ENCODE measurements at regions of chr2 and their contacts with region 1.

Region 1: DNA sequence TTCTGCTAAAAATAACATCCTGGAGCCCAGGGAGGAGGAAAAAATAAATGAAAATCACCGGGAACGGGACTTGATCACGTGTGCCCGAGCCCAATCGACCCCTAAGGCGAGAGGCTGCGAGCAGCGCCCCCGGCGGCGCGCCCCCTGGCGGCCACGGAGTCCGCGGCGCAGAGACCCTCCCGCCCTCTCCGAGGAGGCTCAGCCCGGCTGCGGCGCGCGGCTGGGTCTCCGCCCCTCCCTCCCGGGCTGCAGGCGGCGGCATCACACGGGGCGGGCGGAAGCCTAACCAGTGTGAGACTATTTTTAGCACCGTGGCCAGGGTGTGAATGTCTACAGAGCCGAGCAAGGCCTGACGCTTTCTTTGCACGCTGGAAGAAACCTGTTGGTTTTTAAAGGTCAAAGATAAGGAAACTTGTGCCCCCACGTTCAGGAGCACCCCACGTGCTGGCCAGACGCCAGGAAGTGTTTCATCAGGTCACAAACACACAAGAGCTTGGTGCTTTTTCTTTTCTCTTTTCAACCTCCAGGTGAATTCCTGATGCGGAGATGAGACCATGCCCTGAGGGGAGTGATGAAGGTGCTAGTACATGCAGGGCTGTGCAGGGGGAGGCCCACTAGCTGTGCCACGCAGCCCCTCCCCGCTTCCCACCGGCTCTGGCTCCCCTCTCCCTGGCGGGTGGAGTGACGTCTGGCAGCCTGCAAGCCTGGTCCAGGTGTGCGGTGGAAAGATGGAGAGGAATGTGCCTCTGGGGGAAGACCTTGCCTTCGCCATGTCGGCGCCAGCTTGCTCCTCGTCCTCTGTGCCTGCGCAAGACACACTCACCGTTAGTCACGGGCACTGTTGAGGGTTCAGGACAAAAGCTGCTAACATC is 35.3 kb upstream of the DNMT3A start:
- DNase-seq: peak; percentile 90 to 94
- H3K4me3 ChIP-seq: peak overlapping the region; percentile 16
- H3K4me3 Mint-ChIP-seq: peak overlapping the region; percentile 68
- H3K27ac Mint-ChIP-seq: peak overlapping the region; percentile 66
- H3K4me1 ChIP-seq: peaks cover 19% of the 10 kb centered on the region
- H3K4me1 Mint-ChIP-seq: peaks cover 23% of the 10 kb centered on the region
- H3K27me3 ChIP-seq: no peaks in the 10 kb centered on the region
- H3K27me3 Mint-ChIP-seq: no peaks in the 10 kb centered on the region
- CTCF ChIP-seq: peak; percentile 78 to 98

Region 2: DNA sequence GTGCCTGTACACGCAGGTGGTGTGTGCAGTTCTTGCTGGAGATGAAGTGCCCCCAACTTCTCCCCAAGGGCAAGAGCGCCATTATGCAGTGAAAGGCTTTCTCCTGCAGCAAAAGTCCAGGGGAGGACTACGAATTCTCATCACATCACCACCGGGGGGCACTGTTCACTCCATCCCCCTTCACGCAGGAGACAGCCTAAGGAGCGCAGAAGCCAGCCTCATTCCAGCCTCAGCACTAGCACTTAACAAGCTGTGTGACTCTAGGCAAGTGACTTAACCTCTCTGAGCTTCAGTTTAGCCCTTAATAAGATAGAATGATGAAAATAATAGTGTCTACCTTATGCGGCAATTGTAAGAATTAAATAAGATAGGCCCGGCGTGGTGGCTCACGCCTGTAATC is 67.6 kb before region 1 on chr2:
- CTCF ChIA-PET with region 1: interaction called, 5 read pairs
- POLR2A ChIA-PET with region 1: no interaction called
- intact Hi-C with region 1: loop called (anchors 2 kb)
- DNase-seq: peak; percentile 58 to 68
- H3K4me3 ChIP-seq: no peak overlapping the region
- H3K4me3 Mint-ChIP-seq: no peak overlapping the region
- H3K27ac Mint-ChIP-seq: no peak overlapping the region
- H3K4me1 ChIP-seq: 0 out of 2 replicates have a peak, but pooled peaks cover 3% of the 10 kb centered on the region
- H3K4me1 Mint-ChIP-seq: peaks cover 5% of the 10 kb centered on the region
- H3K27me3 ChIP-seq: no peaks in the 10 kb centered on the region
- H3K27me3 Mint-ChIP-seq: no peaks in the 10 kb centered on the region
- CTCF ChIP-seq: peak; percentile 49 to 53

Region 3: DNA sequence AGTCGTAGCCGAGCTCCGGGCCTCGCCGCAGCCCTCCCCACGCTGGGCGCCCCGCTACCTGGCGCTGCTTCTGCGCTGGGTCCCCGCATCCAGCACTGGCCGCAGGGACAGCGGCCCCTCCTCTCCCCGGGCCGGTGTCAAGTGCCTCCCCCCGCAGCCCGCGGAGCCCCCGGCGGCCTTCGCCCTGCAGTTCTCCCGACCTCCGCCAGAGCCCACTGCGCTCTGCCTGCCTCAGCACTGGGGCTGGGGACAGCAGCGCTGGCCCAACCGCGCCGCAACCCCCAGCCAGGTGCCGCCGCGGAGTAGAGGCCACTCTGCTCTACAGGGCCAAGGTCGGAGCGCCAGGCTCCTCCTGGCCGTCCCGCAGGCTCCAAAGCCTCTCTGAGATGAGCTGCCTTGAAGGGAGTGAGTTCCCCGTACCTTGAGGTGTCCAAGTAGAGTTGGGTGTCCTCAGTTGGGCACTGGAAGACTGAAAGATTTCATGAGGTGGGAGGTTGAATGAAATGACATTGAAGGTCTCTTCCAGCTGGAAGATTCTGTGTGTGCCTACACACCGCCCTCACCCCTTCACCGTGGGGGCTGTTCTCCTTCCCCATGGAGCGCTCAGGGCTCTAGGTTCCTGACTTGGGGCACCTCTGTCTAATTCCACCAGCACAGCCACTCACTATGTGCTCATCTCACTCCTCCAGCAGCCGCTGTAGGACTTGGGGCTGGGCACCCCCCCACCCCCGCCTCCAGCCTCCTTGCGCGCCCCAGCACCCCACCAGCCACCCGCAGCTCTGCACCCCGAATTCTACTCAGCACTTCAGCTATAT is 34.4 kb before region 1 on chr2:
- CTCF ChIA-PET with region 1: no interaction called
- POLR2A ChIA-PET with region 1: no interaction called
- intact Hi-C with region 1: loop called (anchors 1 kb)
- DNase-seq: peak; percentile 89 to 95
- H3K4me3 ChIP-seq: peak overlapping the region; percentile 37
- H3K4me3 Mint-ChIP-seq: peak overlapping the region; percentile 85
- H3K27ac Mint-ChIP-seq: peak overlapping the region; percentile 45
- H3K4me1 ChIP-seq: 0 out of 2 replicates have a peak, but pooled peaks cover 6% of the 10 kb centered on the region
- H3K4me1 Mint-ChIP-seq: peaks cover 5% of the 10 kb centered on the region
- H3K27me3 ChIP-seq: no peaks in the 10 kb centered on the region
- H3K27me3 Mint-ChIP-seq: no peaks in the 10 kb centered on the region
- CTCF ChIP-seq: peak; percentile 91 to 98

Region 4: DNA sequence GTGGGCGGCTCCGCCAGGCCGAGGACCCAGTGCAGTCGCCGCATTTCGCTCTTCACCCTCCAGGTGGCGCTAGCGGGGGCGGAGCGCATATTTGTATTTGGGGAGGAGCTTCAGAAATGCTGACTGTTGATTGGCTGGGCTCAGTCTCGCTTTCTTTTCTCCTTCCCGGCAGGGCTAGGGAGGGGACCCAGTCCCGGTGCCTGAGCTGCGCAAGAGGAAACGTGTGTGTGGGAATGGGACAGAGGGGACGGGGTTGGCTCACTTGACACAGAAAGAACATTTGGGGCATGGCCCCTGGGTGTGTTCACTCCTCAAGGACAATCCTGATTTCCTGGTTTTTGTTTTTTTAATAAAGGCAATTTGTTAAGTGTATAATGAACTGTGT is 14.9 kb before region 1 on chr2:
- CTCF ChIA-PET with region 1: interaction called, 31 read pairs
- POLR2A ChIA-PET with region 1: interaction called, 5 read pairs
- intact Hi-C with region 1: loop called (anchors 1 kb)
- DNase-seq: peak; percentile 93 to 97
- H3K4me3 ChIP-seq: peak overlapping the region; percentile 3; the same call in 1 of the 2 replicates
- H3K4me3 Mint-ChIP-seq: peak overlapping the region; percentile 48
- H3K27ac Mint-ChIP-seq: peak overlapping the region; percentile 19
- H3K4me1 ChIP-seq: no peaks in the 10 kb centered on the region
- H3K4me1 Mint-ChIP-seq: no peaks in the 10 kb centered on the region
- H3K27me3 ChIP-seq: no peaks in the 10 kb centered on the region
- H3K27me3 Mint-ChIP-seq: peaks cover 3% of the 10 kb centered on the region
- CTCF ChIP-seq: peak; percentile 90 to 94

Region 5: DNA sequence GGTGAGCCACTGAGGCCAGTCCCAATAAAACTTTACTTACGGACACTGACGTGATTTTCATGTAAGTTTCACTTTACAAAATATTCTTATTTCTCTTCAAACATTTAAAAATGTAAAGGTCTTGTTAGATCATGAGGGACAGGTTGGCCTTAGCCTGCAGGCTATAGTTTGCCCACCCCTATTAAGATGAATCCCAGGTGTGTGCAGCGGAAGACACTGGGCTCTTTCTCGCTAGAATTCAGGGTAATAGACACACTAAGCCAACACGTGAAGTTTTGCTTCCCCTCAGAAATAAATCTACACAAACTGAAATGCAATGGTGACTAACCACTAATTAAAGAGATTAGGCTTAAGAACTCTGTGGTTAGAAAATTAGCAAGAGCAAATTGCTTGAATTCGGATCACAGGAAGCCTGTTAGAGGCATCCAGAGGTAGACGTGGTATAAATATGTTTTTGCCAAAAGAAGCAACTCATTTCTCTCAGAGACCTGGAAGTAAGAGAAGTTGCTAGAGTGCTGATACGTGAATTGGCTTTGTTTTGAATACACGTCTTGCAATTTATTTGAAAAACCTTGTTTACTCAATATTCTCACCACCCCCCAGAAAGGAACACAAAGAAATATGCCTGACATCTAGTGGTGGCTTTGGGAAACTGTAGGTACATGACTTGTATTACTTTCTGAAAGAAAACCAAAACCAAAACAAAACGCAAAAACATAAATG is 144.8 kb after region 1 on chr2:
- CTCF ChIA-PET with region 1: interaction called, 3 read pairs
- POLR2A ChIA-PET with region 1: no interaction called
- intact Hi-C with region 1: loop called (anchors 2 kb)
- DNase-seq: peak in 1 of 2 experiments; percentile 55
- H3K4me3 ChIP-seq: no peak overlapping the region
- H3K4me3 Mint-ChIP-seq: no peak overlapping the region
- H3K27ac Mint-ChIP-seq: no peak overlapping the region
- H3K4me1 ChIP-seq: peaks cover 6% of the 10 kb centered on the region; the same call in 1 of the 2 replicates
- H3K4me1 Mint-ChIP-seq: peaks cover 7% of the 10 kb centered on the region
- H3K27me3 ChIP-seq: no peaks in the 10 kb centered on the region
- H3K27me3 Mint-ChIP-seq: no peaks in the 10 kb centered on the region
- CTCF ChIP-seq: peak; percentile 81 to 86

Region 6: GRCh38 chr2:25567406-25567805 is 190.4 kb after region 1 on chr2:
- CTCF ChIA-PET with region 1: no interaction called
- POLR2A ChIA-PET with region 1: no interaction called
- intact Hi-C with region 1: loop called (anchors 1 kb)
- DNase-seq: peak in 1 of 2 experiments; percentile 32
- H3K4me3 ChIP-seq: no peak overlapping the region
- H3K4me3 Mint-ChIP-seq: no peak overlapping the region
- H3K27ac Mint-ChIP-seq: no peak overlapping the region
- H3K4me1 ChIP-seq: no peaks in the 10 kb centered on the region
- H3K4me1 Mint-ChIP-seq: no peaks in the 10 kb centered on the region
- H3K27me3 ChIP-seq: no peaks in the 10 kb centered on the region
- H3K27me3 Mint-ChIP-seq: no peaks in the 10 kb centered on the region
- CTCF ChIP-seq: peak; percentile 51 to 52

Region 7: GRCh38 chr2:25664183-25664964 is 287.4 kb after region 1 on chr2:
- CTCF ChIA-PET with region 1: no interaction called
- POLR2A ChIA-PET with region 1: no interaction called
- intact Hi-C with region 1: loop called (anchors 10 kb)
- DNase-seq: peak; percentile 74 to 83
- H3K4me3 ChIP-seq: no peak overlapping the region
- H3K4me3 Mint-ChIP-seq: no peak overlapping the region
- H3K27ac Mint-ChIP-seq: peak overlapping the region; percentile 21
- H3K4me1 ChIP-seq: peaks cover 12% of the 10 kb centered on the region; the same call in 1 of the 2 replicates
- H3K4me1 Mint-ChIP-seq: peaks cover 39% of the 10 kb centered on the region
- H3K27me3 ChIP-seq: no peaks in the 10 kb centered on the region
- H3K27me3 Mint-ChIP-seq: no peaks in the 10 kb centered on the region
- CTCF ChIP-seq: peak; percentile 81 to 88